Posterior cingulate gyrus (tissue), 11 donors: ENCODE measurements at regions of chr3 and their contacts with region 1.

Region 1: DNA sequence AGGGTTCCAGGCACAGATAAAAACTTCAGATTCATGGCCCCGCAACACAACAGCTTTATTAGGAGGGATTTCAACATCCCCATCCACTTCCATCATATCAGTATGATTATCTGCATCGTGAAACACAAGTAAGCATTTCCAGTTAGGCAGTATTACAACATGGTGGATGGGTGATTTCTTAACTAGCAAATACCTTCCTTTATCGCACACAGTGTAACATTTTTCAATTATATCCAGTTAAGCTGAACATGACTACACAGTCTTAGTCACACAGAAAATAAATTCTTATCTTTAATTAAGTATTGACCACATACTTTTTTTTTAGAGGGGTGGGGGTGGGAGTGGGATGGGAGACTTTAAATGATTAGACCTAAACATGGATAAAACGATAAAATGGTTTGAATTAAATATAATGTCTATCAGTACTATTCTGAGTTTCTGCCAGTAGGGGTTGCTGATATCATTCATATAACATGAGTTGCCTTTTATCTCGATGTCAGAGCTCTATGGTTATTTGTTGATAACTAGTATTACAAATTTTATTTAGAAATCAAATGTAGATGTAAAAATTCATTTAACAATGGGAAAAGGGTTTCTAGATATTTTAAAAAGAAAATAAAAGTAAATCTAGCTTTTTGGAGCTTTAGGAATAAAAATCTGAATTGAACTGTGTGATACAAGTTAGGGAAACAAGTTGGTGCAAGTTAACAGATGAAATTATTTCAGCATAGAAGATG is 146.6 kb downstream of the TBL1XR1 start:
- DNase-seq: no peak

Region 2: DNA sequence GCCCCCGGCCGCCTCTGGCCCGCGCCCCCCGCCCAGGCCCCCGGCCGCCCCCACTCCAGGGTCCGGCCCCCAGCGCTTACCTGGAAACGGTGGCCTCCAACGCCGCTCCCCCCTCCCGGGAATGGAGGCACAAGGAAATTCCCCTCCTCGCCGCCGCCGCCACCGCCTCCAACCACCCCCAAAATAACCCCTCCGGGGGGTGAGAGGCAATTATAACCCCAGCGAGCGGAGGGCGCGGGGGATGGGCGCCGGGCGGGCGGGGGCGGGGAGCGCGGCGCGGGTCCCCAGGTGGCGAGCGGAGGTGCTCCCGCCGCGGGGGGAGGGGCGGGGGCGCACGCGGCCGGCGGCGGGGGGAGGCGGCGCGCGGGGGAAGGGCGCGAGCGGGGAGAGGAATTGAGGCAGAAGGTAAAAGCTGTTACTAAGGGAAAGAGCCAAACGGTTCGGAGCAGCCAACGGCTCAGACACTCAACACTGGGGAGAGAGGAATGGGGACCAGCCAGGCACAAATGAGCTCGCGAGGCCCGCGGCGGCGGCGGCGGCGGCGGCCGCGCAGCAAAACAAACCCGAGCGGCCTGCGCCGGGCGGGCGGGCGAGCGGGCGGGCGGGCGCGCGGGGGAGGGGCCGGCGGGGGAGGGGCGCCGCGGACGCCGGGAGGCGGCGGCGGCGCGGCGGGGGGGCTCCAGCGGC is 146.5 kb after region 1 on chr3 and contains the start of gene TBL1XR1:
- intact Hi-C with region 1: loop called (anchors 2 kb)
- DNase-seq: peak; percentile 86 to 98 (median 92)

Region 3: DNA sequence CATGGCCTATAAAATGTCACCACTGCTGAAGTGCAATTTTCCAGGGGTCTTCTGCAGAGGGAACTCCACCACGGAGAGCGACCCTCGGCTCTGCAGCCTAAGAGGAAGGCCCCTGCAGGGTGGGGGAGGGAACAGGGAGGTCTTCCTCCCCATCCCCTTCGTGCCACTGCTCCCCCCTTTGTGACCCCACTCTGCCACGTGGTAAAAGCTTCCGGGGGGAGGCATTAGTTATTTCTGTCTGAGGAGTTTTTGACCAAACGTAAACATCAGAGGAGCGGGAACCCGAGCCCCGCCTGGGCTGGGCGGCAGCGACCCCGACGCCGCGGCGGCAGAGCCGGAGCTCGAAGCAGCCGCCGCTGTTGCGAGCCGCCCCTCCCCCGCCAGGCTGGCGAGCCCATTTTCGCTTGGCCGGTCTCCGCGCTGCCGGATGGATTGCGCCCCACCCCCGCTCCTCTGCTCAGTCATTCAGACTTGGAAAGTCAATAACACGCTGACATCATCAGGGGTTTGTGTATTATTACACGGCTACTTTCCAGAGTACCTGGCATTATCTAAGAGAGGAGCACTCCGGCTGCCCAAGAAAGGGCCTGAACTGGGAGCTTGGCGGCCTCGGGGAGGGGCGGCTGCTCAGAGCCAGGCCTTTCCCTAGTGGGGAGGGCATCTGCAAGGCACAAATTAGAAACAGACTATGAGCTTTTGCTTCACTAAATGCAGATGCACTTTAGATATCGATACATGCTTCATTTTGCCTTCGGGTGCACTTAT is 309.1 kb after region 1 on chr3:
- intact Hi-C with region 1: loop called (anchors 2 kb)
- DNase-seq: peak; percentile 89 to 99 (median 93)

Region 4: GRCh38 chr3:177777699-177778098 is 727.0 kb after region 1 on chr3:
- intact Hi-C with region 1: loop called (anchors 2 kb)
- DNase-seq: peak in 7 of 10 donors; percentile 25 to 89 (median 57)

Region 5: DNA sequence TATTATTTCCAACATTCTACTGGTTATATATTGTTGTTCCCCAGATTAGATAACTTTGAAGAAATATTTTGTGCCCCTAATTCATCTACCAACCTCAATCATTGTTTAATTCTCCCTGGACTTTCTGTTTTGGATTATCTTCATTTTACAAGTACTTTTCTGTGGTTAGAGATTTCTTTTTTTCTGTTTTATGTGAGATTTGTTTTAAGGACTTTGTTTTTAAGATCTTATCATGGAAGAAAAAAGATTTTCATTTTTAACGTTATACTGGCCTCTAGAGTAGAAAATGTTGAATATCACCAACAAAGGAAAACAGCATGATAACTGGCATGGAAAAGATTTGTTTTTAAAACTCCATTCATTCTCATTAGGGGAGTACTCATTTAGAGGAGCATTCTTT is 1274.7 kb after region 1 on chr3:
- intact Hi-C with region 1: loop called (anchors 10 kb)
- DNase-seq: no peak